CD4-positive, alpha-beta memory T cell (primary cell): ENCODE measurements at regions of chr2 and their contacts with region 1.

Region 1: GRCh38 chr2:152717228-152718075 is at the start of gene PRPF40A:
- DNase-seq: peak; percentile 98 to 99 (median 99)
- H3K4me3 ChIP-seq: peak within 1 kb of the TSS; percentile 89 to 94
- H3K4me3 Mint-ChIP-seq: peak within 1 kb of the TSS; percentile 97 to 100 (median 99)
- H3K27ac ChIP-seq: peak within 1 kb of the TSS; percentile 96
- H3K27ac Mint-ChIP-seq: peak within 1 kb of the TSS; percentile 95 to 100 (median 98)
- H3K4me1 ChIP-seq: peaks cover 65% of the 10 kb centered on the region
- H3K4me1 Mint-ChIP-seq: peaks cover 39 to 85% (median 58%) of the 10 kb centered on the region in 4 donors
- H3K27me3 ChIP-seq: no peaks in the 10 kb centered on the region
- H3K27me3 Mint-ChIP-seq: peaks cover 0 to 2% of the 10 kb centered on the region in 2 donors
- total RNA-seq, gene PRPF40A: 95.0 to 105 TPM

Region 2: DNA sequence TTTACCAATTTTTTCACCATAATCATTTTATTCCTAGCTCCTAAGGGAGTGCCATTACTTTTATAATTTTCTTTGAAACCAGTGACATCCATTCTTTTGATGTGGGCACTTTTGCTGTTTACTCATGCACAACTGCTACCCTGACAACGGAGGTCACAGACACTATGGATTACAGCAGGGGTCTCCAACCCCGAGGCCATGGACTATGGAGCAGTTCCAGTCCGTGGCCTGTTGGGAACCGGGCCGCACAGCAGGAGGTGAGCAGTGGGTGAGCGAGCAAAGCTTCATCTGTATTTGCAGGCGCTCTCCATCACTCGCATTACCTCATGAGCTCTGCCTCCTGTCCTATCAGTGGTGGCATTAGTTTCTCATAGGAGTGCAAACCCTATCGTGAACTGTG is 34.8 kb before region 1 on chr2:
- CTCF ChIA-PET with region 1: interaction called, 3 read pairs
- POLR2A ChIA-PET with region 1: no interaction called
- intact Hi-C with region 1: loop called (anchors 5 kb)
- DNase-seq: no peak
- H3K4me3 ChIP-seq: no peak overlapping the region
- H3K4me3 Mint-ChIP-seq: no peak overlapping the region
- H3K27ac ChIP-seq: no peak overlapping the region
- H3K27ac Mint-ChIP-seq: peak overlapping the region in 1 of 7 donors; percentile 2
- H3K4me1 ChIP-seq: peaks cover 6% of the 10 kb centered on the region
- H3K4me1 Mint-ChIP-seq: peaks cover 22 to 47% (median 36%) of the 10 kb centered on the region in 4 donors
- H3K27me3 ChIP-seq: no peaks in the 10 kb centered on the region
- H3K27me3 Mint-ChIP-seq: no peaks in the 10 kb centered on the region

Region 3: GRCh38 chr2:152694161-152694661 is 23.2 kb before region 1 on chr2:
- CTCF ChIA-PET with region 1: interaction called, 12 read pairs
- POLR2A ChIA-PET with region 1: interaction called, 16 read pairs
- intact Hi-C with region 1: loop called (anchors 2 kb)
- DNase-seq: peak; percentile 14 to 67 (median 30)
- H3K4me3 ChIP-seq: peak overlapping the region in 1 of 2 donors; percentile 36
- H3K4me3 Mint-ChIP-seq: peak overlapping the region; percentile 80 to 93 (median 89)
- H3K27ac ChIP-seq: peak overlapping the region; percentile 58
- H3K27ac Mint-ChIP-seq: peak overlapping the region; percentile 81 to 96 (median 94)
- H3K4me1 ChIP-seq: peaks cover 44% of the 10 kb centered on the region
- H3K4me1 Mint-ChIP-seq: peaks cover 25 to 50% (median 29%) of the 10 kb centered on the region in 4 donors
- H3K27me3 ChIP-seq: no peaks in the 10 kb centered on the region
- H3K27me3 Mint-ChIP-seq: no peaks in the 10 kb centered on the region

Region 4: DNA sequence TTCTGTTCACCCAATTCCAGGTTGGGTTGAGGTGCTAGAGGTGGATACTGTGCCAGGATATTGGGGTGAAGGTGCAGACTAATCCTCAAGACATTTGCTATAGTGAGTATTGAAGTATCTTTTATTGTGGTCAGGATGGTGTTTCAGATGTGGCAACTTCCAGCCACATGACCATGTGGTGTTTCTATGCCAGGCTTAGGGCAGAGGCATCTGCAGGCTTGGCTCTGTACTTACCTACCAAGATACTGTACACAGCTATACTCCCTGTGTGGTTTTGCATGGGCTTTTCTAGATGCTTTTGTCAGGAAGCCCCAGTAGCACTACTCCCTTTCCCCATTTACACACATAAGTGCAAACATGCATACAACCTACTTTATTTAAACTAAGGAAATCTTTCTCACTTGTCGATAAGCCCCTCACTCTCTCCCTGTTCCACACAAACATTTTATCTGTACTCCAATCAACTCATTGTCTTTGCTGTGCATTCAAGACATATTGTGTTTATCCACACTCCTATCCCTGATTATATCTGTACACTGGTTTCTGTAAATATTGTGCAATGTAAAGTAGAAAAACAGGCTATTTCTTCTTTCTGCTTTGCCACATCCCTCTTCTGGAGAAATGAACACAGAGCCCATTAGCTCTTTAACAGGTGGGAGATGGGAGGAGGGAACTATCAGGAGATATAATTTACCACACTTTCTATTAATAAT is 13.3 kb after region 1 on chr2:
- CTCF ChIA-PET with region 1: interaction called, 3 read pairs
- POLR2A ChIA-PET with region 1: interaction called, 50 read pairs
- intact Hi-C with region 1: loop called (anchors 1 kb)
- DNase-seq: peak; percentile 74 to 80 (median 75)
- H3K4me3 ChIP-seq: no peak overlapping the region
- H3K4me3 Mint-ChIP-seq: peak overlapping the region in 6 of 8 donors; percentile 17 to 69 (median 35)
- H3K27ac ChIP-seq: no peak overlapping the region
- H3K27ac Mint-ChIP-seq: peak overlapping the region in 5 of 7 donors; percentile 6 to 75 (median 57)
- H3K4me1 ChIP-seq: peaks cover 27% of the 10 kb centered on the region
- H3K4me1 Mint-ChIP-seq: peaks cover 20 to 38% (median 25%) of the 10 kb centered on the region in 4 donors
- H3K27me3 ChIP-seq: no peaks in the 10 kb centered on the region
- H3K27me3 Mint-ChIP-seq: no peaks in the 10 kb centered on the region

Region 5: GRCh38 chr2:152942940-152943440 is 225.5 kb after region 1 on chr2:
- CTCF ChIA-PET with region 1: no interaction called
- POLR2A ChIA-PET with region 1: no interaction called
- intact Hi-C with region 1: no loop called
- DNase-seq: no peak
- H3K4me3 ChIP-seq: no peak overlapping the region
- H3K4me3 Mint-ChIP-seq: no peak overlapping the region
- H3K27ac ChIP-seq: no peak overlapping the region
- H3K27ac Mint-ChIP-seq: no peak overlapping the region
- H3K4me1 ChIP-seq: no peaks in the 10 kb centered on the region
- H3K4me1 Mint-ChIP-seq: peaks cover 0 to 2% (median under 1%) of the 10 kb centered on the region in 4 donors
- H3K27me3 ChIP-seq: no peaks in the 10 kb centered on the region
- H3K27me3 Mint-ChIP-seq: peaks cover 0 to 3% of the 10 kb centered on the region in 2 donors